ENCODE measurements at regions of chr6 and their contacts with region 1.

Region 1: DNA sequence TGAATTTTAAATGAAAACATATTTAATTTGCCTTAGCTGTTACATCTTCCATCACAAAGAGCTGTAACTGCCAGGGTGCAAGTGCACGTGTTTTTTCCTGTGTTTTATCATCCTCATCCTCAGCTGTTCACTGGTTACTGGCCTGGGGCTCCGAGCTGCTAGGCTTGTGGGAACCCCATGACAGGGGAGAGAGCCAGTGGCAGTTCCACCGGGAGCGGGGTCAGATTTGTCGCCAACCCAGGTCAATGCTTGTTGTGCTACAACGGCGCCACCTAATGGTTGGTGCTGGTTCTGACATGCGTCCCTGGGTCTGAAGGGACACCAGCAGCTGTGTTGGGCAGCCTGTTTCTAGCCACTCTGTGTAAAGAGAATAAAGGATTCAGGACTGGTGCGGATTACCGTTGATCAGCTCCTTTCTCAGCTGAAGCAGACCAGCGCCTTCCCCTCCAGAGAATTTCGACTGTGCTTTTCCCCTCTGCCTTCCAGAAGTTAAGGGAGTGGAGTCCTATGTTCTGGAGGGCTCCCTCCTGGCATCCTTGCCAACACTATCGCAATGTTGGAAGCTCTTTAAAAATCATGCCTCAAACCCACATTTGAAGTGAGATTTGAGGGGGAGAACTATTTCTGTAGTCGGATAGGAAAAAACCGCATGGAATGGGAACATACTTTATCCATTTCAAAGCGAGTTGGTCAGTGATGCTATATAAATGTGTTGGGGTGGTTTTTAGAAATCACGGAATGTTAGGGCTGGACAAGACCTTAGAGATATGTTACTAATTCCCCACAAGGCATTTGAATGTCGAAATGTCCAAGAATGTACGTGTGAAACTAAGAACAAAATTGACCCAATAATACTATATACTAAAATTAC is 32.1 kb downstream of the SUMO4 start:
- DNase-seq: peak; percentile 83
- H3K4me3 ChIP-seq: no peak overlapping the region
- H3K27ac ChIP-seq: no peak overlapping the region
- H3K4me1 ChIP-seq: no peaks in the 10 kb centered on the region
- H3K27me3 ChIP-seq: no peaks in the 10 kb centered on the region
- CTCF ChIP-seq: peak; percentile 94

Region 2: DNA sequence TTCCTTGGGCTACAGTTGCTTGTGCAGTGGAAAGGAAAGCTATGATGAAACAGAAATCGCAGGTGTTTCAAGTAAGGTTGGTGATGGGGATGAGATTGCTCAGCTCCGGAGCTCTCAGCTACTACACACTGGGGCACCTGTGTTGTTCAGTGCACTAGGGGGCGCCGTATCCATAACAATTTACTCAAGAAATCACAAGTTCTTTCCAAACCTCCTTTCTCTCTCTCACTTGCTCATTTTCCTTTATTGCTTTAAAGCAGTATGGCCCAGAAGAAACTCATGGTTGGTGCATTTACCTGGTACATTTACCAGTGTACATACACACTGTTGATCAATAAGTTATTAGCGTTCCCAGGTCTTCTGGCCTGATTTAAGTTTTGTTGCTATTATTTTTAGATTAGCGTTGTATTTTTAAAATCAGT is 349.8 kb before region 1 on chr6:
- CTCF ChIA-PET with region 1: interaction called, 20 read pairs
- POLR2A ChIA-PET with region 1: no interaction called
- intact Hi-C with region 1: loop called (anchors 1 kb)
- DNase-seq: peak; percentile 64
- H3K4me3 ChIP-seq: no peak overlapping the region
- H3K27ac ChIP-seq: no peak overlapping the region
- H3K4me1 ChIP-seq: no peaks in the 10 kb centered on the region
- H3K27me3 ChIP-seq: peaks cover 8% of the 10 kb centered on the region
- CTCF ChIP-seq: peak; percentile 86

Region 3: GRCh38 chr6:149190224-149190831 is 241.8 kb before region 1 on chr6:
- CTCF ChIA-PET with region 1: interaction called, 4 read pairs
- POLR2A ChIA-PET with region 1: no interaction called
- intact Hi-C with region 1: loop called (anchors 1 kb)
- DNase-seq: peak; percentile 60
- H3K4me3 ChIP-seq: no peak overlapping the region
- H3K27ac ChIP-seq: no peak overlapping the region
- H3K4me1 ChIP-seq: no peaks in the 10 kb centered on the region
- H3K27me3 ChIP-seq: no peaks in the 10 kb centered on the region
- CTCF ChIP-seq: peak; percentile 56

Region 4: GRCh38 chr6:149513915-149514314 is 81.8 kb after region 1 on chr6:
- CTCF ChIA-PET with region 1: no interaction called
- POLR2A ChIA-PET with region 1: no interaction called
- intact Hi-C with region 1: loop called (anchors 5 kb)
- DNase-seq: no peak
- H3K4me3 ChIP-seq: no peak overlapping the region
- H3K27ac ChIP-seq: no peak overlapping the region
- H3K4me1 ChIP-seq: no peaks in the 10 kb centered on the region
- H3K27me3 ChIP-seq: no peaks in the 10 kb centered on the region
- CTCF ChIP-seq: no peak

Measured in A673 (cell line).